PC-3 (cell line): ENCODE measurements at regions of chr12 and their contacts with region 1.

Region 1: DNA sequence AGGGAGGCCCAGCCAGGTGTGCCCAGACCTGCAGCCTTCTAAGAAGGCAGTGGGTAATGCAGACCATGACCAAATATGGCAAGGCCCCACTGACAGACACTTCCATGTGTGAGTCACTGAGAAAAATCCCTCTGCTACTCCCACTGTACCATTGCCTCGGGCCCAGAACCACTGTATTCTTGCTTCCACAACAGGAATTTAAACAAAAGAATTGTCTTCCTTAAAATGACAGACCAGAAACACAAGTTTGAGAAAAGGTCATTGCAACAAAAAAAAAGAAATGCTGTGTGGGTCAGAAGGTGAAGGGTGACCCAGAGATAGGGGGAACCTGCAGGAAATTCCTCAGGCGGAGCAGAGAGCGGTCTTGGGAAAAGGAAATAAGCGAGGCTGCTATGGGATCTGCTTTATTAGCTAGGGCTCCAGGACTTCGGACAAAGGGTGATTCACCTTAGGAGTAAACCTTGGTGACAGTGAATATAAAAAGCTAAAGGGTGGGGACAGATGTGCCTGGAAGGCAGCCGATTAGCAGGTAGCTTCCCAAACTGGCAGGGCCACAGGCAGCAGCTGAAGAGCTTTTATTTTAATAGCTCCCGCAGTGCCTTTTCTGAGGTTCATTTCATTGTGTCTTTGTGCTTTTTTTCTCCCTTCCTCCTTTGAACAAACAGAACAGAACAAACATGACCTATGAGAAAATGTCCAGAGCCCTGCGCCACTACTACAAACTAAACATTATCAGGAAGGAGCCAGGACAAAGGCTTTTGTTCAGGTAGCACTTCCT is 185.3 kb upstream of the BCL2L14 start:
- DNase-seq: peak; percentile 85
- ATAC-seq: peak; percentile 78
- H3K4me3 ChIP-seq: peak overlapping the region; percentile 58
- H3K27ac ChIP-seq: peak overlapping the region; percentile 100
- H3K4me1 ChIP-seq: peaks cover 48% of the 10 kb centered on the region
- H3K27me3 ChIP-seq: no peaks in the 10 kb centered on the region
- CTCF ChIP-seq: no peak

Region 2: DNA sequence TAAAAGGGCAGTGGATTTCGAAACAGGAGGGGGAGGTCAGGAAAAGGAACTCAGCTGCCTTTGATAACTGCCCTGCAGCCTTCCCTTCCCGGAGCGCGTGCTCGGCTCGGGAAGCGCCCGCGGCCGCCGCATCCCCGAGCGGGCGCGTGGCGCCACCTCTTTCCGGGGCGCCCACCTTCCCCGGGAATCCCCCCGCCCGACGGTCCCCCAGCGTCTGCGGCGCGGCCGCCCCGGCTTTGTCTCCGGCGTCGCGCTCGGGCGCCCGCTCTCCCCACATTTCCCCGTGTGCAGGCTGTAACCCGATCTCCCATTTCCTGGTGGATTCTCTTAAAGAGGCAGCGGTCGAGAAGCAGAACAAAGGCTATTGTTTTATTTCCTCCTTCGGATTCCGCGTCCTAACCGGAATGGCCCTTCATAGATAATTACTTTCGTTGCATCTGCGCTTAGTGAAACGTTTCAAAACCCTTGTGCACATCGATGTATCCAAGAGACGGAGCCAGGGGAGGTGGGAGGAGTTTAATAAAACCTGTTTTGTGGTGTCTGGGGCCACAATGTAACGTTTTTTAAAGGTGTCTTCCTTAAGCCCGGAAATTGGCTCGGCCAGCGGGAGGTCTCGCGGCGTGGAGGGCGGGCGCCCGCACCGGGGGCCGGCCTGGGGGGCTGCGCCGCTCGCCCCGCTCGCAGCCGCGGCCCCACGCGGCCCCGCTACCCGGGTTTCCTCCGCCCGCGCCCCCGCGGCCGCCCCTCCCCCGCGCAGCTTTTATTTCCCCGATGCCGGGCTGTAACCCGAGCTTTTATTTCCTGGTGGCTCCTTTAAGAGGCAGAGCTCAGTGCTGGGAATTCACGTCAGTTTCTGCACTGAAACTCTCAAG is 236.4 kb before region 1 on chr12 and contains the start of gene ETV6:
- CTCF ChIA-PET with region 1: no interaction called
- POLR2A ChIA-PET with region 1: no interaction called
- intact Hi-C with region 1: loop called (anchors 2 kb)
- DNase-seq: peak; percentile 80
- ATAC-seq: peak; percentile 70
- H3K4me3 ChIP-seq: peak within 1 kb of the TSS; percentile 95
- H3K27ac ChIP-seq: peak within 1 kb of the TSS; percentile 88
- H3K4me1 ChIP-seq: peaks cover 14% of the 10 kb centered on the region
- H3K27me3 ChIP-seq: no peaks in the 10 kb centered on the region
- CTCF ChIP-seq: no peak
- total RNA-seq, gene ETV6: 5.0 and 6.6 TPM in 2 replicates

Region 3: GRCh38 chr12:11798856-11799501 is 86.5 kb before region 1 on chr12:
- CTCF ChIA-PET with region 1: no interaction called
- POLR2A ChIA-PET with region 1: interaction called, 3 read pairs
- intact Hi-C with region 1: loop called (anchors 10 kb)
- DNase-seq: peak; percentile 89
- ATAC-seq: peak; percentile 34
- H3K4me3 ChIP-seq: no peak overlapping the region
- H3K27ac ChIP-seq: peak overlapping the region; percentile 75
- H3K4me1 ChIP-seq: peaks cover 39% of the 10 kb centered on the region
- H3K27me3 ChIP-seq: no peaks in the 10 kb centered on the region
- CTCF ChIP-seq: no peak

Region 4: DNA sequence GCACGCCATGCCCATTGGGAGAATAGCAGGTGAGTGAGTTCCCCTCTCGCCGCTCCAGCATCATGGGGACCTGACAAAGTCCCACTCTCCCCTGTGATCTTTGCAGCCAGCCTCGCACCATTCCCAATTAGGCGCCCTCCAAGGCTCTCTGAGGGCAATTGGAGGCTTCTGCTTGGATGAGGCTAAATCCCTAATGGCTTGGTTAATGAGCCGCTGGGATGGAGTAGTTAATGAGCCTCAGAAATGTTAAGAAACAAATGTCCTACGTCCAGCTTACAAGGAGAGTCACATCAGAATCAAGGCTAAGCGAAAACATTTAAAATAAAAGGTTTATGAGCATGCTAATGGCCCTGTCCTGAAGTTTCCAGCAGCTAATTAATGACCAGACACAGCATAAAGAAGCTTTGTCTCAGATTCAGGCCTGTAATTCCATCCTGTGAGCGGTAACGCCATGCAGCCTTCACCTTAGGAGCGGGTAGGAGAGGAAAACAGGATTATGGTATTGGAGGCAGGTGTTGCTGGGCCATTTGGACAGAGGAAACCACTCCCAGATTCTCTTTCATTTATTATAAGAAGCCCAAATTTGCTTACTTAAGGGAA is 15.4 kb before region 1 on chr12:
- CTCF ChIA-PET with region 1: no interaction called
- POLR2A ChIA-PET with region 1: no interaction called
- intact Hi-C with region 1: no loop called
- DNase-seq: no peak
- ATAC-seq: no peak
- H3K4me3 ChIP-seq: no peak overlapping the region
- H3K27ac ChIP-seq: no peak overlapping the region
- H3K4me1 ChIP-seq: peaks cover 2% of the 10 kb centered on the region
- H3K27me3 ChIP-seq: no peaks in the 10 kb centered on the region
- CTCF ChIP-seq: no peak